Activated T-helper 1 cell treated with anti-CD3 and anti-CD28 coated beads, Interleukin-12 subunit alpha, Interleukin-12 subunit beta, Interleukin-2, Interleukin-4 antibody, amounts not matched to agents 30 ng/mL and 10 ng/mL and 1 ng/mL, durations not matched to agents 14 hours and 24 hours and 36 hours (primary cell): ENCODE measurements at regions of chr1 and their contacts with region 1.

Region 1: DNA sequence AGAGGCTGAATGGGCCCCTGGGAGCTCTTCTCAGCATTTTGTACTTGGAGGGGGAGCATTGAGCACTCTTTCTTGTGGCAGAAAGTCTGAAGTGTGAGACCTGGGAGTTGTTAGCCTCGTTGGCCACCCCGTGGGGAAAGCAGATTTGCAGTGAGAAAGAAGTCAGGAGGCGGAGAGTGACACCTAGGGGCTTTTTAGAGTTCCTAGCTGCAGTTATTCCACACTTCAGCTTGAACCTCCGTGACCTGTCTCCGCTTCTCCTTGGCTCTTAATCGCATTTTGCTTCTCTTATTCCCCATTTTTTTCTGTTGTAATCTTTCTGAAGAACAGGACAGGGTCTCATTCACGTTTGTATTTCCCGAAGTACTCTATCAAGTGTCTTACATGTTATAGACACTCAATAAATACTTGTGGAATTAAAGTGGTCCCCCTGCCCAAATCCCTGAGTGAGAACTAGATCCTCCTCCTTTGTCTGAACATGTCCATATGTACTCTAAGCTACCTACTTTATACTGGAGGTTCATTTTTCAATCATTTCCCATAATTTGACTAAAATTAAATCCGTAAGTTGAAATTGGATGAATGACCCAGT is 14.5 kb upstream of the C1orf141 start:
- DNase-seq: peak; percentile 42
- H3K4me3 Mint-ChIP-seq: no peak overlapping the region
- H3K27ac Mint-ChIP-seq: peak overlapping the region; percentile 40
- H3K4me1 Mint-ChIP-seq: peaks cover 56% of the 10 kb centered on the region
- H3K27me3 Mint-ChIP-seq: no peaks in the 10 kb centered on the region

Region 2: GRCh38 chr1:66350001-66350547 is 799.2 kb before region 1 on chr1:
- intact Hi-C with region 1: no loop called
- DNase-seq: no peak
- H3K4me3 Mint-ChIP-seq: peak overlapping the region; percentile 75
- H3K27ac Mint-ChIP-seq: peak overlapping the region; percentile 81
- H3K4me1 Mint-ChIP-seq: peaks cover 90% of the 10 kb centered on the region
- H3K27me3 Mint-ChIP-seq: no peaks in the 10 kb centered on the region

Region 3: GRCh38 chr1:66981679-66982078 is 167.6 kb before region 1 on chr1:
- intact Hi-C with region 1: loop called (anchors 5 kb)
- DNase-seq: peak; percentile 40
- H3K4me3 Mint-ChIP-seq: peak overlapping the region; percentile 69
- H3K27ac Mint-ChIP-seq: peak overlapping the region; percentile 75
- H3K4me1 Mint-ChIP-seq: peaks cover 35% of the 10 kb centered on the region
- H3K27me3 Mint-ChIP-seq: no peaks in the 10 kb centered on the region

Region 4: GRCh38 chr1:66996018-66996682 is 153.1 kb before region 1 on chr1:
- intact Hi-C with region 1: loop called (anchors 1 kb)
- DNase-seq: peak; percentile 56
- H3K4me3 Mint-ChIP-seq: no peak overlapping the region
- H3K27ac Mint-ChIP-seq: peak overlapping the region; percentile 45
- H3K4me1 Mint-ChIP-seq: peaks cover 22% of the 10 kb centered on the region
- H3K27me3 Mint-ChIP-seq: no peaks in the 10 kb centered on the region

Region 5: GRCh38 chr1:67162957-67163356 is 13.7 kb after region 1 on chr1:
- intact Hi-C with region 1: loop called (anchors 1 kb)
- DNase-seq: peak; percentile 62
- H3K4me3 Mint-ChIP-seq: peak overlapping the region; percentile 55
- H3K27ac Mint-ChIP-seq: peak overlapping the region; percentile 93
- H3K4me1 Mint-ChIP-seq: peaks cover 65% of the 10 kb centered on the region
- H3K27me3 Mint-ChIP-seq: no peaks in the 10 kb centered on the region

Region 6: GRCh38 chr1:67500413-67500959 is 351.2 kb after region 1 on chr1:
- intact Hi-C with region 1: loop called (anchors 1 kb)
- DNase-seq: peak; percentile 84
- H3K4me3 Mint-ChIP-seq: no peak overlapping the region
- H3K27ac Mint-ChIP-seq: no peak overlapping the region
- H3K4me1 Mint-ChIP-seq: peaks cover 9% of the 10 kb centered on the region
- H3K27me3 Mint-ChIP-seq: peaks cover 9% of the 10 kb centered on the region